ENCODE measurements at regions of chr17 and their contacts with region 1.

Region 1: DNA sequence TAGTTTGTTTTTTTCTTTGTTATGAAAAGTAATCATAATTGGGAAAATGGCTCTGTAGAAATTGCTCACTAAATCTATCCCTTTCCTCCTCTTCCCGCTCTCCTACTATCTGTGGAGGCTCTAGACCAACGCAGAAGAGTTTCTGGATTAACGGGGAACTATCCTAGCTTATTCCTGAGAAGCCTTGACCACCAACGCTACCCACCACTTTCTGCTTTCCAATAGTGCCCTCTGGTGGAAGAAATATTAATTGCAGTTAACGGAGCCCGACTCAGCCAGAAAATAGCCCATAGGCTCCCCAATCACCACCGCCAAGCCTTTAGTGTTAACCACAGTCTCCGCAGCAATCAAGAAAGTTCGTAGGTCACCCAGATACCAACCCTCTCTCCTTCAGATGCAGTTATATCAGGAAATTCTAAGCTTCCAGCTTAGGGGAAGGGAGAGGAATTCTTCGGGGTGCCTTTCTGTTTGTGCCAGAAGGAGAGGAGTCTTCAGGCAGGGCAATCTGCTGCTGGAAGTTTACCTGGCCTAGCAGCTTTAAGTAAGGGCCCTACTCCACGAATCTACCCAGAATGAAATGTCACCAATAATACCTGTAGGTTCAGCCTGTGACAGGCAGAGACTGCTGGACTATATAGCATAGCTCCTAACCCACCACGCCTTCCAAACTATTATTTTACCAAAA is 23.0 kb upstream of the NSRP1 start:
- DNase-seq: peak; percentile 57
- ATAC-seq: peak; percentile 81
- H3K4me3 Mint-ChIP-seq: no peak overlapping the region
- H3K27ac Mint-ChIP-seq: no peak overlapping the region
- H3K4me1 Mint-ChIP-seq: peaks cover 6% of the 10 kb centered on the region
- H3K27me3 Mint-ChIP-seq: peaks cover 10% of the 10 kb centered on the region

Region 2: DNA sequence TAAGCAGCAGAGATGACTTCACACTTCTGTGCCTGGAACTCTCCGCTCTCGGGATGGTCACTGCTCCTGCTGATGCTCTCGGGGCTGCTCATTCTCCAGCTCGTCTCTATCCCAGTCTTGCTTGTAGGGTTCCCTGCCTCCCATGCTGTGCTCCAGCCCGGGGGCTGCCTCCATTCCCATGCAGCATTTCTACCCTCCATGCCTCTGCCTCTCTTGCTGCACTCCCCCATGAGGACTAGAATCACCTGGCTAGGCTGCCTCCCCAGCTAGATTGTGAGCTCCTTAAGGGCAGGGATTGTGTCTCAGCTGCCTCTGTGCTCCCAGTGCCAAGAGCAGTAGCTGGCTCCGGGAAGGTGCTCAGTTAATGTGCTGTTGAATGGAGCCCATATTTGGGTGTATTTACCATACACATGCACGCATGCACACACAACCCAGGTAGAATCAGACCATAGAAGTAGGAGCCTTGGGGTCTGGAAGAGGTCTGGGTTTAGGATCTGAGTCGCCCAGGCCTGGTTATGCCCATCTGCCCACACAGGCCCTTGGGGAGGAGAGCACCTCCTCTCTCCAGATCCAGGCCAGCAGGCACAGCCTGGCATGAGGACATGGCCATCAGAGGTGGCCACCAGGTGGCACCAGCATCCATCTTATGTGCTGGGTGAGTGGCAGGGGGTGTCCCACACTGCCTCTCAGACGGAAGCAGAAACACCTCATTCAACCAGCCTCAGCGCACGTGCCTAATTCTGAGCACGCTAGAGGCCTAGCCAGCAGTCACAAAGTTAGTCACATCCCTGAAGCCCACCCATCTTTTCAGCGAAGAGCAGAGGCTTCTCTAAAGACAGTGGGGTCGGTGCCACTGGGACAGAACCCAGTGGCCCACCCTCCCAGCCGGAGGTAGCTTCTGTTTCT is 513.5 kb before region 1 on chr17:
- CTCF ChIA-PET with region 1: interaction called, 3 read pairs
- POLR2A ChIA-PET with region 1: no interaction called
- intact Hi-C with region 1: loop called in 1 of 2 experiments (anchors 1 kb)
- DNase-seq: peak; percentile 96
- ATAC-seq: peak; percentile 97
- H3K4me3 Mint-ChIP-seq: no peak overlapping the region
- H3K27ac Mint-ChIP-seq: peak overlapping the region; percentile 72
- H3K4me1 Mint-ChIP-seq: peaks cover 18% of the 10 kb centered on the region
- H3K27me3 Mint-ChIP-seq: no peaks in the 10 kb centered on the region

Region 3: GRCh38 chr17:29807520-29808351 is 285.9 kb before region 1 on chr17:
- CTCF ChIA-PET with region 1: interaction called, 15 read pairs
- POLR2A ChIA-PET with region 1: no interaction called
- intact Hi-C with region 1: loop called (anchors 1 to 2 kb)
- DNase-seq: peak; percentile 83
- ATAC-seq: peak; percentile 74
- H3K4me3 Mint-ChIP-seq: no peak overlapping the region
- H3K27ac Mint-ChIP-seq: no peak overlapping the region
- H3K4me1 Mint-ChIP-seq: peaks cover 15% of the 10 kb centered on the region
- H3K27me3 Mint-ChIP-seq: no peaks in the 10 kb centered on the region

Region 4: DNA sequence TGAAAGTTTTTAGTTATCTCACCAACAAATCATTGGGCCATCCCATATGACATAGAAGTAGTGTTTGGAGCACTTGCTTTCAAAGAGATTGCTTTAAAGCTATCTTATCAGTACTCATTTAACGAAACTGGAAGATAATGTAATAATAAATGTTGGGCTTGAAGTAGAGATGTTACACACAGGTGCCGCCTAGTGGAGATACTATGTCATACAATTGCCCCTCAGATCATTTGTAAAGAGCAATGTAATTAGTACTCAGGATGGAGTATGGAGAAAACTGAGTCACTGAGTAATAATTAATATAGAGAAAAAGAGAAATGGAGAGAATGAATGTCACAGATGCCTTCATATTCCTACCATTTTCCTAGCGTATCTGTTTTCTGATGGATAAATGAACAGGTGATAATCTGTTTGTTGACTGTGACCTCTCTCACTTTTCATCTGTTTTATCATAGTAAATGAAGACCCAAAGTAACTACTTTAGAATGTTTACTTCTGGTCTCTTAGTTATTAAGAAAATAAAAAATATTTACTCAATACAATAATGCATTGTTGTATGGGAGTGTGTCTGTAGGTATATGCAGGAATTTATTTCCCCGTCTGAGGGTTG is 71.8 kb before region 1 on chr17:
- CTCF ChIA-PET with region 1: interaction called, 11 read pairs
- POLR2A ChIA-PET with region 1: no interaction called
- intact Hi-C with region 1: loop called (anchors 1 kb)
- DNase-seq: peak; percentile 47
- ATAC-seq: peak; percentile 64
- H3K4me3 Mint-ChIP-seq: no peak overlapping the region
- H3K27ac Mint-ChIP-seq: no peak overlapping the region
- H3K4me1 Mint-ChIP-seq: no peaks in the 10 kb centered on the region
- H3K27me3 Mint-ChIP-seq: peaks cover 2% of the 10 kb centered on the region

Region 5: GRCh38 chr17:30031214-30031869 is 62.3 kb before region 1 on chr17:
- CTCF ChIA-PET with region 1: interaction called, 30 read pairs
- POLR2A ChIA-PET with region 1: no interaction called
- intact Hi-C with region 1: loop called (anchors 1 kb)
- DNase-seq: no peak
- ATAC-seq: peak; percentile 64
- H3K4me3 Mint-ChIP-seq: no peak overlapping the region
- H3K27ac Mint-ChIP-seq: no peak overlapping the region
- H3K4me1 Mint-ChIP-seq: no peaks in the 10 kb centered on the region
- H3K27me3 Mint-ChIP-seq: no peaks in the 10 kb centered on the region

Region 6: DNA sequence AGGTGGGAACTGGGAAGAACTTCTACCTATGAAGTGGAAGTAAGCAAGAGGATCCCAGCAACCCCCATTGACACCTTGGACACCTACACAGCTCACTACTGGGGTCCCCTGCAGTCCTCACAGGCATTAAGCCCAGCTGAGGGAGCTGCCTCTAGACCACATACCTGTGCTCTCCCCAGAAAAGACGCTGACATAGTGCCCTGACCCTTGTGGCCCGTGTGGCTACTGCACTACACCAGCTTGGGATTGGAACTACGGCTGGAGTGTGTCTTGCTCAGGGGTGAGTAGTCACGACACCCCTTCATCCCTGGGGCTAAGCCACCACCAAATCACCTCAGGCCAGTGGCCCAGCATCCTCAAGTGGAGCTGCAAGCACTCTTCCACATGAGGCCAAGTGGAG is 31.2 kb before region 1 on chr17:
- CTCF ChIA-PET with region 1: interaction called, 13 read pairs
- POLR2A ChIA-PET with region 1: no interaction called
- intact Hi-C with region 1: no loop called
- DNase-seq: no peak
- ATAC-seq: no peak
- H3K4me3 Mint-ChIP-seq: no peak overlapping the region
- H3K27ac Mint-ChIP-seq: no peak overlapping the region
- H3K4me1 Mint-ChIP-seq: no peaks in the 10 kb centered on the region
- H3K27me3 Mint-ChIP-seq: peaks cover 15% of the 10 kb centered on the region

Region 7: GRCh38 chr17:30104575-30105339 is 11.2 kb after region 1 on chr17:
- CTCF ChIA-PET with region 1: interaction called, 64 read pairs
- POLR2A ChIA-PET with region 1: no interaction called
- intact Hi-C with region 1: no loop called
- DNase-seq: peak; percentile 81
- ATAC-seq: peak; percentile 97
- H3K4me3 Mint-ChIP-seq: peak overlapping the region; percentile 67
- H3K27ac Mint-ChIP-seq: peak overlapping the region; percentile 24
- H3K4me1 Mint-ChIP-seq: peaks cover 5% of the 10 kb centered on the region
- H3K27me3 Mint-ChIP-seq: peaks cover 2% of the 10 kb centered on the region

Region 8: DNA sequence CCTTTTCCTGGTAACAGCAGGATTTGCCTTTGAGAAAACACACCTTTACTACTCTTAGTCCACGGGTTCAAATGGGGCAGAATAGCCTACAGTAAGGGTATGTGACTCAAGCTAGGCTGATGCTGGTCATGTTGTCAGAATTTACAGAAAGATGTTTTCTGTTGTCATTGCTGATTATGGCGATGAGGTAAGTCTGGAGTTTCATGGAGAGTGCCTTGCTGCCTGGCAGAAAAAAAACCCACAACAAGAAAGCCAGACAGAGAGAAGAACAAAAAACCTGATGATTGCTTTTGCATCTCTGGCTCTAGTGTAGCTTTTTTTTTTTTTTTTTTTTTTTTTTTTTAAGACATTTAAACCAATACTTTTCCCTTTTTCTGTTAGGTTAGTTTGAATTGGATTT is 94.0 kb after region 1 on chr17:
- CTCF ChIA-PET with region 1: no interaction called
- POLR2A ChIA-PET with region 1: no interaction called
- intact Hi-C with region 1: no loop called
- DNase-seq: no peak
- ATAC-seq: no peak
- H3K4me3 Mint-ChIP-seq: no peak overlapping the region
- H3K27ac Mint-ChIP-seq: peak overlapping the region; percentile 23
- H3K4me1 Mint-ChIP-seq: peaks cover 6% of the 10 kb centered on the region
- H3K27me3 Mint-ChIP-seq: no peaks in the 10 kb centered on the region